Psoas muscle (tissue), 8 donors: ENCODE measurements at regions of chr6 and their contacts with region 1.

Region 1: DNA sequence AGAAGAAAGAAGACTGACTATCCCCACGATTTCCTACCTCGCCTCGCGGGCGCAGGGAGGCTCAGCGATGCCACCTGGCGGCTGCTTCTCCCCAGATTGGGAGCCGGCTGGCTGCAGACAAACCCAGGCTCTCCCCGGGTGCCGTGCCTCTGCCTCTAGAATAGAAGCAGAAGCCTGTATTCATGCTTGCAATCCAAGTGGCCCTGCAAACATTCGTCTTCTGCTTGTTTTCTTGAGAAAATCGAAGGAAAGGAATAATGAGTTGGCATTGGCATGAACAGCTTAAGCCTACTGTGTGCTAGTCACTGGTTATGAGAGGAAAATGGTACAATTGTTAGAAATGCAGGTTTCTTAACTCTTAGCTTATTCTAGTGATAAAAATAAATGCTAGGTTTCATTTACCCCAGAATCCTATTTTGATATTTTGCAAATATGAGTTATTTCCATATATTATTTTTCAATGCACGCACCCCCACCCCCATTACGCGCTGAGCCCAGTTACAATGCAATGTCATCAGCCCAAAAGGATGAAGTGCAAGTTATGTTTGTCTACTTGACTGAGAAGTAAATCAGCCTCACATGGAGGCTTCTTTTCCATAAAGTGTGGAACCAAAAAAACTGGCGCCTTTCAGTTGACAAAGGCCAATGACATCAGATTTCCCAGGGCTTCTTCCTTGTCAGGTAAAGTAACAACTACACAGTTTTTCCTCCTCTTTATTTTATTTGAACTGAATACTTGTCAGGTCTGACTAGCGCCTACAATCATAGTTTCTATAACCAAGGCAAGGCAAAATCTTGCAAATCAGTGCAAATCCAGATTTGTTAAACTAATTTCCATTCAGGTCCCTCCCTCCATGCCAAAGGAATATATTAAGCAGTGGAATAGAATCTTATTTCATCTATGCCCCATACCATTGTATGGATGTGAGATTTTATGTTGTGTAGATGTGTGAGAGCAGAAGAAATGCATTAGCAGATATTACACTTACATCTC is 3.9 kb upstream of the SOX4 start:
- DNase-seq: peak; percentile 85 to 91
- ATAC-seq: peak; percentile 78 to 82 (median 79)
- H3K4me3 ChIP-seq: peak overlapping the region; percentile 83
- H3K27ac ChIP-seq: peak overlapping the region; percentile 84
- H3K4me1 ChIP-seq: peaks cover 5% of the 10 kb centered on the region
- H3K27me3 ChIP-seq: no peaks in the 10 kb centered on the region
- CTCF ChIP-seq: peak; percentile 94

Region 2: GRCh38 chr6:20564269-20564668 is 1025.4 kb before region 1 on chr6:
- intact Hi-C with region 1: loop called (anchors 2 kb)
- DNase-seq: no peak
- ATAC-seq: no peak
- H3K4me3 ChIP-seq: no peak overlapping the region
- H3K27ac ChIP-seq: no peak overlapping the region
- H3K4me1 ChIP-seq: peaks cover 11% of the 10 kb centered on the region
- H3K27me3 ChIP-seq: no peaks in the 10 kb centered on the region
- CTCF ChIP-seq: peak; percentile 74

Region 3: DNA sequence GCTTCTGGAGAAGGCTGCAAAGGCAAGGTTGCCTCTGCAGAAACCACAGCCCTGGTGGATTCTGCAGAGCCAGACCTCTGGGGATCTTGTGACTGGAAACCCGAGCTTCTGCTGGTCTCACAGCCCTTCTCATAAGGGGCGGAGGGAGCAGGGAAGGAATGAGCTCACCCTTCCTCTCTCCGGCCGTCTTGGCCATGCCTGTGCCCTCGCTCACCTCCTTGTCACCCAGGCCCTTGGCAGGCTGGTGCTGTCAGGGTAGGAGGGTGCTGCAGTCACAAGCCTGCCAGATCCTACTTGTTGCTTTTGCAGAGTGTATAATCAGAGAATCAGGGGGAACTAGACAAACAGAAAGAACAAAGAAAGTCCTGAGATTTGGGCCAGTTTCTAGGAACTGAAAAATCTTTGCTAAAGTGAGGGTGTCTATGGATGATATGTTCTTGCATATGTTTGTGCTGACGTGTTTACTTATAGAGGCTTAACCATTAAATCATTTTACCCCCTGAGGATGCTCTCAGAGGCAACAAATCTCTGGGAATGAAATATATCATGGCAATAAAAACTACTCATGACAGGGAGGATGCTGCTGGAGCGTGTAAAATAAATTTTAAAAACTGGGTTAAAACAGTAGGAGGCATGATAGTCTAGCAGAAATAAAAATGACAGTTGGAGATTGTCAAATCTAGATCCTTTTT is 241.0 kb before region 1 on chr6:
- intact Hi-C with region 1: loop called in 1 of 2 experiments (anchors 5 kb)
- DNase-seq: peak; percentile 39 to 74
- ATAC-seq: peak; percentile 86 to 99 (median 98)
- H3K4me3 ChIP-seq: no peak overlapping the region
- H3K27ac ChIP-seq: peak overlapping the region; percentile 51
- H3K4me1 ChIP-seq: peaks cover 15% of the 10 kb centered on the region
- H3K27me3 ChIP-seq: no peaks in the 10 kb centered on the region
- CTCF ChIP-seq: no peak

Region 4: GRCh38 chr6:21438237-21438985 is 151.2 kb before region 1 on chr6:
- intact Hi-C with region 1: loop called in 1 of 2 experiments (anchors 5 kb)
- DNase-seq: no peak
- ATAC-seq: peak; percentile 67 to 92 (median 84)
- H3K4me3 ChIP-seq: no peak overlapping the region
- H3K27ac ChIP-seq: peak overlapping the region; percentile 76
- H3K4me1 ChIP-seq: peaks cover 10% of the 10 kb centered on the region
- H3K27me3 ChIP-seq: no peaks in the 10 kb centered on the region
- CTCF ChIP-seq: no peak